PC-3 (cell line): ENCODE measurements at regions of chr17 and their contacts with region 1.

Region 1: DNA sequence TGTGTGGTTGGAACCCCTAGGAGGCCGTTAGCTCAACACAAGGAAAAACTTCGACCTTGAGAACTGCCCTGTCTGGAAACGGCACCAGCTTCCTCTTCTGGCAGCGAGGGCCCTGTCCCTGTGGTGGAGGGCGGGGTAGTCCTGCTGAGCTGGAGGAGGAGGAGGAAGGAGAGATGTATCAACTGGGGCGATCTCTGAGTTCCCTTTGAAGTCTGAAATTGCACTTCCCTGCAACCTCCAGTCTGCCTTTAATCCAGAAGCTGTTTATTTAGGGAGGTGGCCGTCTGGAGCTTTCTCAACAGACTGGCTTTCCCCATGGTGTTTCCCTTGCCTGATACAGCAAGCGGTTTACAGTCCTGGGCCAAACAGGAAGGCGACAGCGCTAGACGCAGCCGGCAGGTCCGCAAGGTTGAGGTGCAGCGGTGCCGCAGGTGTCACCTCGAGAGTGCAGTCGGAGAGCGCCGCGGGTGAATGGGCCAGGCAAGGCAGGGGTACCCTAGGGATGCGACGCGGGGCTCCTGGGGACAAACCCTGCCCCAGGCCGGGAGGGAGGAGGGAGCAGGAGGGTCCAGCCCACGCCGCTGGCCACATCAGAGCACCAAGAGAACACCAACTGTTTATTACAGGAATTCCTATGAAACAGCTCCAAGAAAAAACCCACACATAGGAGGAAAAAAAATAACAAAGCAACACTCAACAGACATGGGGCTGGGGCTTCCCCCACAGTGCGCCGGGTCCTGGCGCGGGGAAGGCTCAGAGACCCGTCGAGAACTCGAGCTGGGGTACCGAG is 11.4 kb upstream of the MRPS23 start:
- DNase-seq: peak; percentile 50
- ATAC-seq: peak; percentile 30
- H3K4me3 ChIP-seq: peak overlapping the region; percentile 63
- H3K27ac ChIP-seq: peak overlapping the region; percentile 8
- H3K4me1 ChIP-seq: peaks cover 27% of the 10 kb centered on the region
- H3K27me3 ChIP-seq: no peaks in the 10 kb centered on the region
- CTCF ChIP-seq: no peak

Region 2: DNA sequence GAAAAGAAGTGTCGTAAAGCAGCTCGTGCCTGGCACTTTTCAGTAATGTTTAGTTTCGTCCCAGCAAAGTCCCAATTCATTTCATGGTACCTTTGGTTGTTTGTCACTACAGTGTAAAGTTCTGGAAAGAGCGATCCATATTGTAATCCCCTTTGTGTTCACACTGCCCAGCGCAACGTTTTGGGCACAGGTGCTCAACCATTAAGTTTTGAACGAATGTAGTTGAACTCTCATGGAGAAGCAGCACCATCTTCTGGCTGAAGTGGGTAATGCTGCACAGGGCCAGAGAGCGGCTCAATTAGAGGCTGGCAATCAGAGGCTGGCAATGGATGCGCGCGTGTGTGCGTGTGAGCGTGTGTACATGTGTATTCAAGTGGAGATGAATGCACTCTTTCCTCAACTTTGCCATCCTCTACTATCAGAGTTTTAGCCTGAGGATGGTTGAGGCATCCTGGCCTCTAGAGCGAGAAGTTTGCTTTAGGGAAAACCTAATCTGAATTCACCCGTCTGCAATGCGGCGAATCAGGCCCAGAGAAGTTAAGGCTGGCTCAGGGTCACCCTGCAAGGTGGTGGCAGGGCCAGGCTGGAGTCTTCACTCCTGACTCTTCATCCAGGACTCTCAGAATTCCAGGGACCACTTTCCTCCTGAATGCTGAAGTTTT is 251.9 kb after region 1 on chr17:
- CTCF ChIA-PET with region 1: no interaction called
- POLR2A ChIA-PET with region 1: no interaction called
- intact Hi-C with region 1: loop called (anchors 1 kb)
- DNase-seq: peak; percentile 93
- ATAC-seq: peak; percentile 86
- H3K4me3 ChIP-seq: no peak overlapping the region
- H3K27ac ChIP-seq: no peak overlapping the region
- H3K4me1 ChIP-seq: no peaks in the 10 kb centered on the region
- H3K27me3 ChIP-seq: no peaks in the 10 kb centered on the region; the same call in 1 of the 2 replicates
- CTCF ChIP-seq: peak; percentile 98